PC-3 (cell line): ENCODE measurements at regions of chr5 and their contacts with region 1.

Region 1: DNA sequence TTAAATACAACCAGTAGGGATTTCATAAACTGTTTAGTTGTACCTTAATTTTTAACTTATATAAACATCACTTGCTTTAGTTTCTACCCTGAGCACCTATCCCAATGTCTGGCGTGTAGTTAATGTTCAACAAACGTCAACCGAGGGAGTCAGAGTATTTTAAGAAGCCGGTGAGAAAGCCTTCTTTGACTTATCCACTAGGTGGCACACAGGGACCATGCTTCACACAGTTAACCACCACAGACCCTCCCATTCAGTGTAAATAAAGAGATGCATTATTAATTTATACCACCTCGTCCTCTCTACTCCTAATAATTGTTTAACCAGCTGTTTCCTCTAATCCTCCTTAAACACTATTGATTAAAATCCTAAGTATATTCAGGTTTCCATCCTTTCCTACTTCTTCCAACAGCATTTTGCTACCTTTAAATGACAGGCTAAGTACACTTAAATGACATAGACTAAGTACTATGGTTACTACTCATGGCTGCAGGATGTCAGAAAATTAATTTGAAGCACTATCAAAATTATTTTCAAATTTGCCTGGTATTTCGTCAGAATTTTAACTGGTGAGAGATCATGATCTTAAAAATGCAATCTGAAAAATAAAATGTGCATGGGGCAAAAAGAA is 2.3 kb downstream of the HAPLN1 start:
- DNase-seq: peak; percentile 72
- ATAC-seq: peak; percentile 37
- H3K4me3 ChIP-seq: no peak overlapping the region
- H3K27ac ChIP-seq: no peak overlapping the region
- H3K4me1 ChIP-seq: peaks cover 28% of the 10 kb centered on the region
- H3K27me3 ChIP-seq: no peaks in the 10 kb centered on the region
- CTCF ChIP-seq: peak; percentile 82

Region 2: GRCh38 chr5:84017523-84018230 is 299.4 kb after region 1 on chr5:
- CTCF ChIA-PET with region 1: no interaction called
- POLR2A ChIA-PET with region 1: no interaction called
- intact Hi-C with region 1: loop called (anchors 2 kb)
- DNase-seq: peak; percentile 76
- ATAC-seq: peak; percentile 76
- H3K4me3 ChIP-seq: no peak overlapping the region
- H3K27ac ChIP-seq: peak overlapping the region; percentile 95
- H3K4me1 ChIP-seq: peaks cover 42% of the 10 kb centered on the region
- H3K27me3 ChIP-seq: no peaks in the 10 kb centered on the region
- CTCF ChIP-seq: no peak

Region 3: DNA sequence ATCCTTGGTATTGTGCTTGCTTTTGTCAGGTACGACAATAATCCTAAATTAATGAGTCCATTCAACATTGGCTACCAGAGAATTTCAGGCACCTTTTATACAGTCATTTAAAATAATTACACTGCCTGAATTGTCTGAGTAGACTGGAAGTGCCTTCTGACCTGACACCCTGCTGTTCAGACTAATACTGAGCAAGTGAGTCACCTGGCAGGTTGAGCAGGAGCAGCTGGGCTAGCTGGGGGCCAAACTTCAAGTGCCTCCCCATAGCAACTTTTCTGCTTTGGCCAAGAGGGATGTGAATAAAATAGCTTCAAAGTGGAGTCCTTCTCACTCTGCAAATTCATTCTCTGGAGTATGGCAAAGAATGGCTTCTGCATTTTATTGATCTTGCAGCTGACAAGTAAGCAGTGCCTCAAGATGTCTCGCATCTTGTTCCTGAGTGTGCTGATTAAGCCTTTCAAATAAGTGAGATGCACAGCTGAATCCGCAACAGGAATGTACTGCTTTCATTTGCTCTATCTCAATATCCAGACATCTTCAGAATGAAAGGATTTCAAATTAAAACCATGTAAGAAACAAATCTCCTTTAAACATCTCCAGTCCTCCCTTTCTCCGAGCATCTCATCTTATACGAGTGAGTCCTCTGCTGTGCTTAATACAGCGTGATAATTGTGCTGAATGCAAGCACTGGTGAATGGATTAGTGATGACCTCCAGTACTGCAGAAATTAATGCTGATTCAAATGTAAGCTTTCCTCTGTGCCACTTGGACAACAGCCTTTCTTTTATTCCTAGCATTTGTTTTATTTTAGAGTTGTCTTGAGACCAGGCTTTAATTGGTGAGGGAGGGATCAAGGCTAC is 395.2 kb after region 1 on chr5:
- CTCF ChIA-PET with region 1: no interaction called
- POLR2A ChIA-PET with region 1: no interaction called
- intact Hi-C with region 1: loop called (anchors 10 kb)
- DNase-seq: no peak
- ATAC-seq: peak; percentile 43; the same call in 1 of the 2 replicates
- H3K4me3 ChIP-seq: no peak overlapping the region
- H3K27ac ChIP-seq: no peak overlapping the region
- H3K4me1 ChIP-seq: peaks cover 21% of the 10 kb centered on the region
- H3K27me3 ChIP-seq: no peaks in the 10 kb centered on the region
- CTCF ChIP-seq: no peak

Region 4: GRCh38 chr5:84249918-84250630 is 531.8 kb after region 1 on chr5:
- CTCF ChIA-PET with region 1: no interaction called
- POLR2A ChIA-PET with region 1: no interaction called
- intact Hi-C with region 1: loop called (anchors 5 kb)
- DNase-seq: peak; percentile 84
- ATAC-seq: peak; percentile 76
- H3K4me3 ChIP-seq: peak overlapping the region; percentile 47; the same call in 1 of the 2 replicates
- H3K27ac ChIP-seq: peak overlapping the region; percentile 58
- H3K4me1 ChIP-seq: peaks cover 54% of the 10 kb centered on the region
- H3K27me3 ChIP-seq: no peaks in the 10 kb centered on the region
- CTCF ChIP-seq: no peak

Region 5: DNA sequence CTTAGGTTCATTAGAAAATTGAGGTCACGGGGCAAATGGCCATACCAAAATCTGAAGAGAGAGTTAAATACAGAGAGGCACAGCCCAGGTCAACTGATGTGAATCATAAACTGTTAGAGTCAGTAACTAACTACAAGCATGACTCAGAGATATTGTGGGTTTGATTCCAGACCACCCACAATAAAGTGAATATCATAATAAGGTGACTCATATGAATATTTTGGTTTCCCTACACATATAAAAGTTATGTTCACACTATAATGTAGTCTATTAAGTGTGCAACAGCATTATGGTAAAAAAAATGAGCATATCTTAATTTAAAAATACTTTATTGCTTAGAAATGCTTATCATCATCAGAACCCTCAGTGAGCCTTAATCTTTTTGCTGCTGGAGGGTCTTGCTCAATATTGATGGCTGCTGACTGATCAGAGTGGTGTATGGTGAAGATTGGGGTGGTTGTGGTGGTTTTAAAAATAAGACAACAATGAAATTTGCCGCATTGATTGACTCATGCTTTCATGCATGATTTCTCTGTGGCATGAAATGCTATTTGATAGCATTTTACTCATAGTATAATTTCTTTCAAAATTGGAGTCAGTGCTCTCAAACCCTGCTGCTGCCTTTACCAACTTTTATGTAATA is 719.5 kb after region 1 on chr5:
- CTCF ChIA-PET with region 1: no interaction called
- POLR2A ChIA-PET with region 1: no interaction called
- intact Hi-C with region 1: loop called (anchors 10 kb)
- DNase-seq: peak; percentile 84
- ATAC-seq: peak; percentile 93
- H3K4me3 ChIP-seq: no peak overlapping the region
- H3K27ac ChIP-seq: peak overlapping the region; percentile 84
- H3K4me1 ChIP-seq: peaks cover 18% of the 10 kb centered on the region
- H3K27me3 ChIP-seq: no peaks in the 10 kb centered on the region
- CTCF ChIP-seq: no peak

Region 6: DNA sequence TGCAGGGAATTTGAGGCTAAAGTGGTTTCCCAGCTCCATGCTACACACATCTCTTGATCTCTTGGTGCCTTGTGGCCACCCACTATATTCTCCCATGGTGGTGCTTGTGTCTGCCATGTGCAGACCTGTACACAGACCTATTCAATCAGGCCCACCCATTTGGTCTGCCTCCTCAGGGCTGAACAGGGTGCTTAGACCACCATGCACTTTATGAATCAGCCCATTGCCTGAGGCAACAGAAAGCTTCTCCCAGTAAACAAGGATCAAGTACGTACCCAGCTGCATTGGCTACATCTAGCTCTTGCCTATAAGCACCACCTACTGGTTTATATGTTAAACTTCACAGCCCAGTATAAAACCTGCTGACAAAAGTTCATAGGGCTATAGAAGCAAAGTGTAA is 1330.7 kb after region 1 on chr5:
- CTCF ChIA-PET with region 1: no interaction called
- POLR2A ChIA-PET with region 1: no interaction called
- intact Hi-C with region 1: loop called (anchors 1 kb)
- DNase-seq: peak; percentile 77
- ATAC-seq: peak; percentile 95
- H3K4me3 ChIP-seq: no peak overlapping the region
- H3K27ac ChIP-seq: no peak overlapping the region
- H3K4me1 ChIP-seq: no peaks in the 10 kb centered on the region
- H3K27me3 ChIP-seq: peaks cover 16% of the 10 kb centered on the region; the same call in 1 of the 2 replicates
- CTCF ChIP-seq: peak; percentile 83